ENCODE measurements at regions of chr2 and their contacts with region 1.

Region 1: DNA sequence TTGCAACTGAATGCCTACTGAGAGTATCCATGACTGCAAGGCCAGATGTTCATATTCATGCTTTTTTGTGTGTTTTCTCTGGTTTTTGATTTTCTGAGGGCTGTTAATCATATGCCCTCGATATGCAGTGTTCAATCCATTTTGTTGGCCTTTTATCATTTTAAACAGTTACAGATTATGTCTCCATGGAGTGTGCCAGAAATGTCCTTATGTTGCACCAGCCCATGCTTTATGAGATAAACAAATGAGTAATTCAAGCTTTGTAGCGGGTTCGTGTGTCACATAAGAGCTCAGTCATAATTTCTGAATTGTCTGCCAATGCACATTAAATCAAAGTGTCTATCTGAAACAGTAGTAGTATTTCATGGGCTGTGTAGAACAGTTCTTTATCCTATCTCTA is 583.0 kb downstream of the THSD7B start:
- DNase-seq: no peak
- ATAC-seq: no peak
- H3K4me3 ChIP-seq: no peak overlapping the region
- H3K27ac ChIP-seq: no peak overlapping the region
- H3K4me1 ChIP-seq: no peaks in the 10 kb centered on the region
- H3K27me3 ChIP-seq: no peaks in the 10 kb centered on the region
- CTCF ChIP-seq: no peak

Region 2: GRCh38 chr2:137252937-137253336 is 95.4 kb before region 1 on chr2:
- CTCF ChIA-PET with region 1: interaction called, 16 read pairs
- POLR2A ChIA-PET with region 1: no interaction called
- in situ Hi-C with region 1: no loop called
- intact Hi-C with region 1: no loop called
- DNase-seq: no peak
- ATAC-seq: no peak
- H3K4me3 ChIP-seq: no peak overlapping the region
- H3K27ac ChIP-seq: no peak overlapping the region
- H3K4me1 ChIP-seq: no peaks in the 10 kb centered on the region
- H3K27me3 ChIP-seq: no peaks in the 10 kb centered on the region
- CTCF ChIP-seq: no peak

Measured in Panc1 (cell line).